Psoas muscle (tissue), 8 donors: ENCODE measurements at regions of chr3 and their contacts with region 1.

Region 1: DNA sequence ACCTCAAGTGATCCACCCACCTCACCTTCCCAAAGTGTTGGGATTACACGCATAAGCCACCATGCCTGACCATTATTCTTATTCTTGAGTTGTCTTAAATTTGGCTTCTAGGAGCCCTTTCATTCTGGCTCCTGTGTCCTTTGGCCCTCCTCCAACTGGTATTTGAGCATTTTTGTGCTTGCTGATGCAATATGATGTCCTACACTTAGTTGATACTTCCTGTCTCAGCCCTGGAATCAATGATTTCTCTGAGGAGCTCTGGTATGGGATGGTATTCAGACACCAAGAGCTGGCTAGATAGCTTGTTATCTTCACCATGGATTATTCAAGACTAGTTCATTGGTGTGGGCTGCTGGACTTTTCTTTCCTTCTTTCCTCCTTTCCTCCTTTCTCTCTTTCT is 25.4 kb downstream of the ZNF621 start:
- DNase-seq: no peak
- ATAC-seq: no peak
- H3K4me3 ChIP-seq: no peak overlapping the region
- H3K27ac ChIP-seq: no peak overlapping the region
- H3K4me1 ChIP-seq: no peaks in the 10 kb centered on the region
- H3K27me3 ChIP-seq: no peaks in the 10 kb centered on the region
- CTCF ChIP-seq: no peak

Region 2: GRCh38 chr3:38725726-38726419 is 1824.3 kb before region 1 on chr3:
- intact Hi-C with region 1: loop called in 1 of 2 experiments (anchors 5 kb)
- DNase-seq: no peak
- ATAC-seq: no peak
- H3K4me3 ChIP-seq: no peak overlapping the region
- H3K27ac ChIP-seq: no peak overlapping the region
- H3K4me1 ChIP-seq: no peaks in the 10 kb centered on the region
- H3K27me3 ChIP-seq: peaks cover 0 to 5% (median 0%) of the 10 kb centered on the region in 3 donors
- CTCF ChIP-seq: no peak

Region 3: DNA sequence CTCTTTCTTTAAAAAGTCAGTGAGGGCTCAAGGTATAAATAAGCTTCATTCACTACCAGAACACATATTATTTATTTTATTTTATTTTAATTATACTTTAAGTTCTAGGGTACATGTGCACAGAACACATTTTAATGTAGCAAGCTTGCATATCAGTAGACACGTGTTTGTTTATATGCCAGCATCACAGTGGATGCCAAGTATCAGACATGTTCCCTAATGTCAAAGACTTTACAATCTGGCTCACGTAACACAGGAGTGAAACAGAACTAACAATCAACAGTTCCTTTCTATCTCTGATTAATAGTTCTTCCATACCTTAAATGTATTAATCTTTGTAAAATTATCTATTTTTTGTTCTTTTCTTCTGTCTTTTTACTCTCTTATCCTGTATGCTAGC is 186.5 kb before region 1 on chr3:
- intact Hi-C with region 1: no loop called
- DNase-seq: no peak
- ATAC-seq: no peak
- H3K4me3 ChIP-seq: no peak overlapping the region
- H3K27ac ChIP-seq: no peak overlapping the region
- H3K4me1 ChIP-seq: no peaks in the 10 kb centered on the region
- H3K27me3 ChIP-seq: peaks cover 0 to 2% (median 0%) of the 10 kb centered on the region in 3 donors
- CTCF ChIP-seq: no peak